ENCODE measurements at regions of chr20 and their contacts with region 1.

Region 1: DNA sequence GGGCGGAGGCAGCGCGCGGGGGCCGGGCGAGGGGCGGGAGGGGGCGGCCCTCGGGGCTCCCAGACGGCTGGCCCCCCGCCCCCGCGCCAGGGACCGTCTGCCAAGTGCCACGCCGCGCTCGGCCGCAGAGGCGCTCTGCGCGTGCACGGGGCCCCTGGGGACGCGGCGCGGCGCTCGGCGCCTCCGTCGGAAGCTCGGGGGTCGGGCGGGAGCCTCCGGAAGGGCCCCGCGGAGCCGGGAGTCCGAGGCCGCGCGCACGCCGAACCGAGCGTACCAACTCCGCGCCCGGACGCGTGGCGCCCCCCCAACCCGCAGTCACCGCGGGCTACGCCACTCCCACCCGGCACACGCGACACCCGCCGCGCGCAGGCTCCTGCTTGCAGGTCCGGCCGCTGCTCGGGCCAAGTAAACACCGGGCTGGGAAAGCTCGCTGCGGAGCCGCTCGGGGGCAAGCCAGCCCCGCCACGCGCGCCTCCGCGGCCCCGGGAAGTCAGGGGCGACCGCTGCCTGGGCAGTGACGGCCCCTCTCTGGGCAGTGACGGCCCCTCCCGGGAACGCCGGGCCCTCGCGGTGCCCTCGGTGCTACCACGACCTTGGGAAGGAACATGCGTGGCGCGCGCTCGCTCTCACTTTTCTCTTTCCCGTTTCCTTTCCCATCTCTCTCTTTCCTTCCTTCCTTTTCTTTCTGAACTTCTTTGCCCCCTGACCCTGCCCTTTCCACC is 384 bp upstream of the PREX1 start:
- DNase-seq: peak; percentile 64
- H3K4me3 Mint-ChIP-seq: peak overlapping the region; percentile 77
- H3K27ac Mint-ChIP-seq: no peak overlapping the region
- H3K4me1 Mint-ChIP-seq: peaks cover 40% of the 10 kb centered on the region
- H3K27me3 Mint-ChIP-seq: peaks cover 20% of the 10 kb centered on the region

Region 2: DNA sequence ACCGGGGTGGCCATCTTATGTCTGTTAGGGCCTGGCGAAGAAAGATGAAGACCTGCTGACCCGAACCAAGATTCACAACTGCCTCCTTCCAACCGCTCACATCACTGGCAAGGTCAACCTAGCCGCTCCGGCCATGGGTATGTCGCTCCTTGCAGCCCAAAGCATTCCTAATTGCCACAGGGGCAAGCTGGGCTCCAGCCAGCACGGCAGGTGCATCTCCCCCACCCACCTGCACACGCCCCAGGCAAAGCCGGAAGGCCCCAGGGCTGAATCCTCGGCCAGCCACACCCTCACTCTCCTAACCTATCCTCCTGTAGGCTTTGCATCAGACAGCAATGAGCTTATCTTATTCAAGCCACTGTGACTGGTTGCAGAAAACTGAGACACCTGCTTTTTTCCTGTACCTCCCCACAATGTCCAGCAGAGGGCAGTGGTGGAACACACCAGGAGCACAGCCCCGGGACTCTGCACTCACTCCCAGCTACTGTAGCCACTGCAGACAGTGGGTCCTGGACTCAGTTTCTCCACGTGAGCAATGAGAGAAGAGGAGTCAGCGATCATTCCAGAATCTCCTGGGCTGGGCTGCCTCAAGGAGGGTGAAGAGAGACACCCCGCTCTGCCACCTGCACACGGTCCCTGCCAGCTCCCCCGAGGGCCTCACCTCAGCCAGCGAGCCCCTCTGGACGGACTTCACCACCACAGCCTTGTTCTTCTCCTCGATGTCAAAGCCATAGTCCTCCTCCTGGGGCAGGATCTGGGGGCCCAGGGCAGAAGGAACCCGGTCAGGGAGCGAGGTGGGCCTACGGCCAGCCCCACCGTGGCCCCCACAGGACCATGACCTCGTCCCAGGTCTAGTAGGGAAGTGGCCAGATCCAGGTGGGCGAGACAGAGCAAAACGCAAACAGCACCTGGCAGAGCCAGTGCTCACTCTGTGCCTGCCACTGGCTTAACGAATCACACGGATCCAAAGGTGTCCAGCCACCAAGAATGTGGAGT is 170.4 kb before region 1 on chr20:
- CTCF ChIA-PET with region 1: interaction called, 6 read pairs
- intact Hi-C with region 1: loop called (anchors 5 kb)
- DNase-seq: peak; percentile 81
- H3K4me3 Mint-ChIP-seq: no peak overlapping the region
- H3K27ac Mint-ChIP-seq: peak overlapping the region; percentile 18
- H3K4me1 Mint-ChIP-seq: no peaks in the 10 kb centered on the region
- H3K27me3 Mint-ChIP-seq: no peaks in the 10 kb centered on the region

Region 3: DNA sequence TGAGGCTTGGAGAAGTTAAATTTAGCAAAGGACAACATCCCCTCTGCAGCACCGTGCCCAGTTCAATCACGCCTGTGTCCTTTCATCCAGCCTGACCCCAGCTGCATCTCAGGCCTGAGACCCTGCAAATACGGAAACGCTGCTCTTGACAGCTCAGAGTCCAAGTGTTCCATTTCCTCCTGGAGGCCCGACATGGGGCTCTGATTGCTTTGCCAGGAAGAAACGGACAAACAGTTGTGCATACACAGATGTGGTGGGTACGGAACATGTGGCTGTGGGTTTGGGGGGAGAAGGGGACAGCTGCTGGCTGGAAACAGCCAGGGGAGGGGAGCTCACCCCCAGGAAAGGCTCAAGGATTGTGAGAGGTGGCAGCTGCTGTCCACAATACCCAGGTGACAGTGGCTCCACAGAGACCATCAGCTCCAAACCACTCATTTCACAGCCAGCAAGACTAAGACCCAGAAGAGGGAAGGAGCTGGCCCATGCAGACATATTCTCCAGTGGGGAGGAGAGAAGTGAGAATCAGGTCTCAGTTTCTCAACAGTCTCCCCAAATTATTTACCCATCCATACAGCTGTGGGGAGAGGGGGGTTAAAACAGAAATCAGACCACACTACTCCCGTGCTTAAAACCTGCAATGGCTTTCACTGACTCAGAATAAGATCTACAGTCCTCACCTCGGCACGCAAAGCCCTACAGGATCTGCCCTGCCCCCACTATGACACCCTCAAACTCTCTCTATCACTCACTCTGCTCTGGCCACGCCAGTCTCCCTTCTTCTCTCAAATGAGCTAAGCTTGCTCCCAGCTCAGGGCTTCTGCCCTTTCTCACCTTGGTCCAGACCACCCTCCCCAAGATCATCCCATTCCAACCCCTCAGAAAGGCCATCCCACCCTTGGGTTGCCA is 89.5 kb before region 1 on chr20:
- CTCF ChIA-PET with region 1: interaction called, 3 read pairs
- intact Hi-C with region 1: loop called (anchors 1 kb)
- DNase-seq: peak; percentile 88
- H3K4me3 Mint-ChIP-seq: no peak overlapping the region
- H3K27ac Mint-ChIP-seq: peak overlapping the region; percentile 79
- H3K4me1 Mint-ChIP-seq: peaks cover 32% of the 10 kb centered on the region
- H3K27me3 Mint-ChIP-seq: no peaks in the 10 kb centered on the region

Region 4: DNA sequence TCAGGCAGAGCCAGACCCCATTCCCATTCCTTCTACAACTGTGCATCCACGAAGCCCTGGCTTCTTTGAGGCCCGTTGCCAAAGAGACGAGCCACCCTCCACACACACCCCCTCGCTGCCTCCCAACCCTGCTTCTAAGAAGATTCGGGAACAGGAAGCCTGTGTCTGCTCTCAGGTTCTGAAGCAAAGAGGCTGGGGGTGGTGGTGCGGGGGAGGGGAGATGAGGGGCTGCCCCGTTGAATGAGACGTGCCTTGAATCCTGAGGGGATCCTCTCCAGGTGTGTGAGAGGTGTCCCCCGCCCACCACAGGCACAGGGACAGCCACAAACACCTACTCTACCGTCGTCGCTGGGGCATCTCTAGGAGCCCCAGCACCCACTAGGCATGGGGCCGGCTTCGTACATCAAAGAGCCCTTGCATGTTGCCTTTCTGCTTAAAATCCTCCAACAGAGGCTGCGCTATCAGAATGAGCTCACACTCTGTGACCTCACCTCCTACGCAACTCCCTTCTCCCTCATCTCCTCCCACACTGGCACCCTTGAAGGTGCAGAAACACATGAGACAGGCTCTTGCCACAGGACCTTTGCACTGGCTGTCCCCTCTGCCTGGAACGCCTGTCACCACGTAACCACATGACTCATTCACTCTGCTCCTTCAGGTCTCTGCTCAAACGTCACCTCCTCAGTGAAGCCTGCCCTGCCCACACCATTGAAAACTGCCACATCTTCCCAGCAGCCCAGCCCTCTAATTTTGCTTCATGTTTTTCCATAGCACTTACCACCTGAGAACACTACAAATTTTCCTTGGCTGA is 58.9 kb before region 1 on chr20:
- CTCF ChIA-PET with region 1: no interaction called
- intact Hi-C with region 1: loop called (anchors 1 kb)
- DNase-seq: peak; percentile 98
- H3K4me3 Mint-ChIP-seq: peak overlapping the region; percentile 64
- H3K27ac Mint-ChIP-seq: peak overlapping the region; percentile 68
- H3K4me1 Mint-ChIP-seq: peaks cover 67% of the 10 kb centered on the region
- H3K27me3 Mint-ChIP-seq: no peaks in the 10 kb centered on the region

Region 5: DNA sequence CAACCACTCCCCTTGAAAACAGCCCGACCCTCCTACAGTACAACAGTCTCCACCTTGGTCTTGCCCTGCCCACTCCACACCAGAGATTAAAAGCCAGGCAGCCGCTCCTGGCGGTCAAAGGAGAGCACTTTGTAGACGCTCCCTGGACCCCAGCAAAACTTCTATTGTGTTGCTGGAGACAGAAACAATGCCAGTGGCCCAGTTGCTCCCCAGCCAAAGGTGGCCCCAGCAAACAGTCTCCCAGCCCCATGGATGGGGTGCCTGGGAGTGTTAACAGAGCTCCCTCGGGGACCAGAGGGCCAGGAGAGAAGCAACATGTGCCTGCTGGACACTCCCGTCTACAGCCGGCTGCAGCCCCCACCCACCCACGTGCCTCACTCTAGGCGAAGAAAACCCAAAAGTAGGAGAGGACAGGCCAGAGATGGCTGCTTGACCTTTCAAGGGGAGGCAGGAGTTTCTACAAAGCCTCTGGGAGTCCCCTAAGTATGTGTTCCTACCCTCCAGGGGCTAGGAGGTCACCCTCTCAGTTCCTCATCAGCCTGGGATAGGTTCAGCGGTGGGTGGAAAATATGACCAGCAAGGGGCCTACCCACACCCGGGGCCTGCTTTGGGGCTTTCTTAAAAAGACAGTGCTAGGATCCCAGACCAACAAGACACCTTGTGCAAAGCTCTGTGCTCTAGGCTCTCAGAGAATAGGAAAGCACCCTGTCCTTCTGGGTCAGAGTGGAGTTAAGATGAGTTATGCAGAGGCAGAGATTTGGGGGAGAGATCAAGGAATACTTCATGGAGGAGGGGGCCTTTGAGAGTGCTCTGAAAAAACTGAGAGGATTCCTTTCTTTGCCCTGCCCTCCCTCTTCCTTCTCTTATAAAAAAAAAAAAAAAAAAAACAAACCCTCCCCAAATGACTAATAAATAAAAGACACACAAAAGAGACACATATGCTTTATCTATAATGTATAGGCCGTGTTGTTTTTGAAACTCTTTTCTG is 18.6 kb after region 1 on chr20:
- CTCF ChIA-PET with region 1: no interaction called
- intact Hi-C with region 1: loop called (anchors 2 kb)
- DNase-seq: peak; percentile 87
- H3K4me3 Mint-ChIP-seq: no peak overlapping the region
- H3K27ac Mint-ChIP-seq: peak overlapping the region; percentile 78
- H3K4me1 Mint-ChIP-seq: peaks cover 15% of the 10 kb centered on the region
- H3K27me3 Mint-ChIP-seq: no peaks in the 10 kb centered on the region

Region 6: GRCh38 chr20:48921151-48921898 is 93.1 kb after region 1 on chr20 and contains the start of gene ARFGEF2:
- CTCF ChIA-PET with region 1: no interaction called
- intact Hi-C with region 1: loop called (anchors 5 kb)
- DNase-seq: peak; percentile 94
- H3K4me3 Mint-ChIP-seq: peak within 1 kb of the TSS; percentile 100
- H3K27ac Mint-ChIP-seq: peak within 1 kb of the TSS; percentile 98
- H3K4me1 Mint-ChIP-seq: peaks cover 46% of the 10 kb centered on the region
- H3K27me3 Mint-ChIP-seq: no peaks in the 10 kb centered on the region
- total RNA-seq, gene ARFGEF2: 18.2 to 18.6 TPM

Region 7: GRCh38 chr20:49166534-49167449 is 338.6 kb after region 1 on chr20:
- CTCF ChIA-PET with region 1: no interaction called
- intact Hi-C with region 1: loop called (anchors 10 kb)
- DNase-seq: no peak
- H3K4me3 Mint-ChIP-seq: peak overlapping the region; percentile 48
- H3K27ac Mint-ChIP-seq: peak overlapping the region; percentile 84
- H3K4me1 Mint-ChIP-seq: peaks cover 71% of the 10 kb centered on the region
- H3K27me3 Mint-ChIP-seq: no peaks in the 10 kb centered on the region

Measured in activated naive CD4-positive, alpha-beta T cell treated with anti-CD3 and anti-CD28 coated beads for 36 hours (primary cell).